ENCODE measurements at regions of chrX and their contacts with region 1.

Region 1: DNA sequence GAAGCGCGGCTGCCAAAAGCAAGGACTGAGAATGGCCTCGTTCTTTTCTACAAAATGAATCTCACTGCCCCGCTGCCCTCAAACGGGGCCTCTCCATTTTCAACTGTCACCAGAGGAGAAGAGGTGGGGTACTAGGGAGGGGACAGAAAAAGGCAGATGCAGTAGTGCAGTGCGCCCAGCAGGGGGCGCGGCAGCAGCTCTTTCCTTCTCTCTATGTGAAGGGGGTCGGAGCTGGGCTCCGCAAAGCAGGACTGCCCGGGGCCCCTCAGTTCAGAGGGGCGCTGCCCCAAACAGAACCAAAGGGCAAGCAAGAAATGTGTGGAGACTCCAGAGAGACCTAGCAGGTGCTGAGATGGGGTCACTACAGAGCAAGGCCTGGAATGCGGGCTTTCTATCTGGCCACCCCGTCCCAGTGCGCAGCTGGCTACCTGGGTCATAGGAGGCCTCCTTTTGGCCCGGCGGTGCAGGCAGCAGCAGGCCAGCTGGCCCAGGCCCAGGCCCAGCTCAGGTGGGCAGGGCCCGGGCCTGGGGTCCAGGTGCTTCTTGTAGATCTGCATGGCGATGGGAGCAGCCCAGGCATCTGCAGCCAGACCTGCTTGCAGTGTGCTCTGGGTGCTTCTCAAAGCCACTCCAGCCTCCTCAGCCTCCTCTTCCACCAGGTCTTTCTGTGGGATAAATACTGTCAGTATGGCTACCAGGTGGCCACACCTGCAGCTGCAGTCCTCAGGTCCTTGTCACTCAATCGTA is 5.9 kb downstream of the IRAK1 start:
- DNase-seq: no peak

Region 2: GRCh38 chrX:153875391-153876111 is 138.2 kb before region 1 on chrX:
- intact Hi-C with region 1: no loop called
- DNase-seq: peak; percentile 82

Region 3: DNA sequence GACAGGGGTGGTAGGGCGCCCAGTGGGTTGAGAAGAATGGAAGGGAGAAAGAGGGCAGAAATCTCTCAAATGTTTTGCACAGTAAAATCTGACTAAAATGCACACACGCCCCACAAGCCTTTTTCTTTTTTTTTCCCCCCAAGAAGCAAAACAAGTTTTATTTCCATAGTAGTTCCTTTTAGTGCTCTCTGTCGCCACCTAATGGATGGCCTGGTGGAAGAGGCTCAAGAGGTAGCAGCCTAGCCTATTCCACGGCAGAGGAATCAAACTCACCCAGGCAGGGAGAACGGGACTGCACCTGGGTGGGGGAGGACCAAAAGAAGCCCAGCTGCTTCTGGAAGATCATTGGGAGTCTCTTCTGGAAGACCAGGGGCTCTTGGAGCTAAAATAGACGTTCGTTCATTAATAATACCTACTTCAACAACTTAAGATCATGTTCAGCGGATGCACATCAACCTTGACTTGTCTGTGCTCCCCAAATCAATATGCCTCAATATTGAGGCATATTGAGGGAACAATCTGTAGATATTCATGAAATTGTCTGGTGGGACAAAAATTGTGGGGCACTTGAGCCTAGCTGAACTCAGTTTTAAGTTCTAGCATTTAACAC is 37.5 kb after region 1 on chrX:
- intact Hi-C with region 1: loop called (anchors 2 kb)
- DNase-seq: no peak

Region 4: GRCh38 chrX:154097597-154098541 is 84.1 kb after region 1 on chrX and contains the start of gene MECP2:
- intact Hi-C with region 1: no loop called
- DNase-seq: peak; percentile 96
- total RNA-seq, gene MECP2: 37.6 TPM

Region 5: DNA sequence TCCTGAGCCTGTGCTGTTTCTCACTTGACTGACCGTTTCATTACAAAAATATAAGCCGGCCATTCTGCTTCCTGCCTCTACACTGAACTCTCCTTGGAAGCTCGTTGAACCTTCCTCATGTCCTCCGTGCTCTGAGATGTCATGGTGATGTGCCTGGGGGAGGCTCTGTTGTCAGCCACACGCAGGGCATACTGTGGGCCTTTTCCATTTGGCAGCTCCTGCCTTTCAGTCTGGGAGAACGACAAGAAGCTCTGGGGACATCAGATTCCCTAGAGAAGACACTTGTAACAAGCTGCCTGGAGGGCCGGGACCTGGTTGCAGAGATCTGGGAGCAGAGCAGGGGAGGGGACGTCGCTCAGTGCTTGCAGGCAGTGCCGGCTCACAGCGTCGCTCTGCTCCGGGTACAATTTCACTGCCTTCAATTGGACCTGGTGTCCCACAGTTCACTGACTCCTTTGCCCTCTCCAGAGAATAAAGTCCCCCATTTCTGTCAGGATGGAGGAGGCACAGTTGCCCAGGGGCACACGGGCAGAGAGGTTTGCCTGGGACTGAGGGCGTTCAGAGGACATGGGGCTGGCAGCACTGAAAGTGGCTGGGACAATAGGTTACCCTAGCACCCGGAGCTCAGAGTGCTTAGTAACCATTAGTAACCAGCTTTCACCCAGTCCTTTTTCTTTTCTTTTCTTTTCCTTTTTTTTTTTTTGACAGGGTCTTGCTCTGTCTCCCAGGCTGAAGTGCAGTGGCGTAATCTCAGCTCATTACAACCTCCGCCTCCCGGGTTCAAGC is 102.8 kb after region 1 on chrX:
- intact Hi-C with region 1: no loop called
- DNase-seq: no peak

Region 6: DNA sequence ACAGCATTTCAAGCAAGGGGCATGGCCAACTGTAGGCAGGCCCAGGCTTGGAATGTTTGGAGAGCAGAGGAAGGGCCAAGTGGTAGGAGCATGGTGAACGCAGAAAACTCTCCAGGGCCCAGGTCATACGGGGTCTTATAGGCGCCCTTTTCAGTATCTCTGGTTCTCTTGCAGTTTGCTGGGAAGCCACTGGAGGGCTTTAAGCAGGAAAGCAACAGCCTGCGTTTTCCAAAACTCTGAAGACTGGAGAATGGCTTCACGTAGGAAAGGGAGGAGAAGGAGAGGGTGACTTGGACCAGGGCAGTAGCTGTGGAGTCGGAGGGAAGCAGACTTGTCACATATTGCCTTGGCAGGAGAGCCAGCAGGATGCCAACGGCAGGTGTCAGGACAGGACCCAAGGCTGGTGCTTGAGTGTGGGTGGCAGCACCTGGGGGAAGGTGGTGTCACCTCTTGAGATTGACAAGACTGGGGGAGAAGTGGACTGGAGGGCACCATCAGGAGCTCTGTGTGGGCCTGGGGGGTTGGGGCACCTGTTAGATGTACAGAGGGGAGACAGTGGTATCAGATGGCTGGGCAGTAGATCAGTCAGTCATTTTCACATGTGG is 303.7 kb after region 1 on chrX:
- intact Hi-C with region 1: loop called (anchors 5 kb)
- DNase-seq: no peak

Region 7: GRCh38 chrX:154348114-154348531 is 334.3 kb after region 1 on chrX:
- intact Hi-C with region 1: no loop called
- DNase-seq: no peak

Measured in cardiac septum (tissue), 1 donor.